ENCODE measurements at regions of chr10 and their contacts with region 1.

Region 1: GRCh38 chr10:116385994-116386809 is 41.4 kb upstream of the PNLIPRP3 start:
- DNase-seq: no peak
- ATAC-seq: no peak
- H3K4me3 ChIP-seq: no peak overlapping the region
- H3K27ac ChIP-seq: no peak overlapping the region
- H3K4me1 ChIP-seq: no peaks in the 10 kb centered on the region
- H3K27me3 ChIP-seq: no peaks in the 10 kb centered on the region
- CTCF ChIP-seq: peak; percentile 26 to 71 (median 53)
- POLR2A ChIP-seq: no peak

Region 2: DNA sequence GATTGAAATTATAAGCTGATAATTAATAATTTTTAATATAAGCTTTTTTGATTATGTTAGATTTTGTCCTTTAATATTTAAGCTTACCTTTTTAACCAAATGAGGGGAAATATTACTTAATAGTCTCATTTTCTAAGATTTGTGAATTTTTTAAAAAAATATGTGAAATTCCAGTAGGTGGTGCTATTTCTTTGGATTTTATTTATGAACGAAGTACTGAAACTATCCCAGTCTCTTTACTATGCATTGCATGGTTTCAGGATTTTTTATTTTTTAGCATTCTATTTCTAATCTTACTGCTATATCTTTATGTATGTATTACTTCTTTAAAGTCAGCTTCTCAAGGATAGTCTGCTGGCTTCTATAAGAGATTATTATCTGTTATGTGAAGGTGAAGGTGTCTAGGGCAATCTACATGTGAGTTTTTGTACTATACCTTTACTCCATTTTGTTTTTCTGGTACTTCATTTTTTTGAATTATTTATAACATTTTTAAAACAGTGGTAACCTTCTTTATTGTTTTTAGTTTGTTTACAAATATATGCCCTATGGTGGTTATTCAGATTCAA is 1214.7 kb before region 1 on chr10:
- intact Hi-C with region 1: loop called in 3 of 10 experiments (anchors 10 kb)
- DNase-seq: no peak
- ATAC-seq: no peak
- H3K4me3 ChIP-seq: no peak overlapping the region
- H3K27ac ChIP-seq: no peak overlapping the region
- H3K4me1 ChIP-seq: peaks cover 0 to 4% (median 0%) of the 10 kb centered on the region in 12 donors
- H3K27me3 ChIP-seq: no peaks in the 10 kb centered on the region
- CTCF ChIP-seq: peak in 9 of 12 donors; percentile 23 to 54 (median 38)
- POLR2A ChIP-seq: no peak

Region 3: GRCh38 chr10:115432188-115432775 is 953.9 kb before region 1 on chr10:
- intact Hi-C with region 1: loop called in 2 of 10 experiments (anchors 10 kb)
- DNase-seq: no peak
- ATAC-seq: no peak
- H3K4me3 ChIP-seq: no peak overlapping the region
- H3K27ac ChIP-seq: no peak overlapping the region
- H3K4me1 ChIP-seq: no peaks in the 10 kb centered on the region
- H3K27me3 ChIP-seq: no peaks in the 10 kb centered on the region
- CTCF ChIP-seq: peak in 6 of 12 donors; percentile 20 to 40 (median 32)
- POLR2A ChIP-seq: no peak

Region 4: DNA sequence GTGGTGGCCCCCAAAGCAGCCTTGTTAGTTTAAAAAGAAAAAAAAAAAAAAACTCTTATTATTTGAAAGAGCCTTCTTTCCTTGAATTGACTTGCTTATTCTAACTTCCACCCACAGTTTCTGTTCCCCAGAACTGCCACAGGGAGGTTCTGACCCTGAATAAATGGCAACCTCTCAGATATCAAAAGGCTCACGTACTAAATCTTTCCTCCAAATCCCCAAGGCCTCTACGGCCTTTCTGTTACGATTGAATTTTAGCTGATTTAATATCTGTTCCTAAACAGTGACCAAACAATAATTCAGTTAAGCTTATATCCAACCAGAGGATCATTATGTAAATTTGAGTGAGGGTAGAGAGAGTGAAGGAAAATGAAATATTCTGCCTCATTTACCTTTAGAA is 596.0 kb before region 1 on chr10:
- intact Hi-C with region 1: loop called in 2 of 10 experiments (anchors 5 to 10 kb)
- DNase-seq: no peak
- ATAC-seq: no peak
- H3K4me3 ChIP-seq: no peak overlapping the region
- H3K27ac ChIP-seq: no peak overlapping the region
- H3K4me1 ChIP-seq: no peaks in the 10 kb centered on the region
- H3K27me3 ChIP-seq: peaks cover 0 to 3% (median 0%) of the 10 kb centered on the region in 9 donors
- CTCF ChIP-seq: no peak
- POLR2A ChIP-seq: no peak

Region 5: DNA sequence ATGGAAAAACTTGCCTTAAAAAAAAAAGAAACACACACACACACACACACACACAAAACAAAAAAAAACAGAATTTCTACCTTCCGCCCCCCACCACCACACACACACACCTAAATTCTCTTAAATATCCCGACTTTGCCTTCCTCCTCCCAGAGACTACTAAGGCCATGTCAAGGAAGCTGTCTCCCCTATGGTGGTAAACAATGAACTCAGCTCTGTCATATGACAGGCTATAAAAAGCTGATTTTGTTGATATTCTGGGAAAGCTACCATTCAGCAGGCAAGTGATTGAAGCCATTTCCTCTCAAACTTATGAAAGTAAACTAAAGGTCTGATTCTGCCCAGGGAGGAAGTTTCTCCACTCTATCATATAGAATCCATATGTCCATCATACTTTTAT is 584.2 kb before region 1 on chr10:
- intact Hi-C with region 1: loop called in 3 of 10 experiments (anchors 5 to 10 kb)
- DNase-seq: no peak
- ATAC-seq: no peak
- H3K4me3 ChIP-seq: no peak overlapping the region
- H3K27ac ChIP-seq: no peak overlapping the region
- H3K4me1 ChIP-seq: no peaks in the 10 kb centered on the region
- H3K27me3 ChIP-seq: no peaks in the 10 kb centered on the region
- CTCF ChIP-seq: no peak
- POLR2A ChIP-seq: no peak

Region 6: GRCh38 chr10:116300542-116300941 is 85.7 kb before region 1 on chr10:
- intact Hi-C with region 1: no loop called
- DNase-seq: no peak
- ATAC-seq: no peak
- H3K4me3 ChIP-seq: no peak overlapping the region
- H3K27ac ChIP-seq: no peak overlapping the region
- H3K4me1 ChIP-seq: no peaks in the 10 kb centered on the region
- H3K27me3 ChIP-seq: peaks cover 0 to 3% (median 0%) of the 10 kb centered on the region in 9 donors
- CTCF ChIP-seq: no peak
- POLR2A ChIP-seq: no peak

Measured in heart left ventricle (tissue), 16 donors.